Activated T-helper 1 cell treated with anti-CD3 and anti-CD28 coated beads, Interleukin-12 subunit alpha, Interleukin-12 subunit beta, Interleukin-2, Interleukin-4 antibody, amounts not matched to agents 30 ng/mL and 10 ng/mL and 1 ng/mL, durations not matched to agents 14 hours and 24 hours and 36 hours (primary cell): ENCODE measurements at regions of chr3 and their contacts with region 1.

Region 1: GRCh38 chr3:107235928-107236315 is 141.3 kb upstream of the CCDC54 start:
- DNase-seq: peak; percentile 44
- H3K4me3 Mint-ChIP-seq: peak overlapping the region; percentile 48
- H3K27ac Mint-ChIP-seq: no peak overlapping the region
- H3K4me1 Mint-ChIP-seq: peaks cover 11% of the 10 kb centered on the region
- H3K27me3 Mint-ChIP-seq: peaks cover 19% of the 10 kb centered on the region

Region 2: GRCh38 chr3:107421170-107421792 is 185.4 kb after region 1 on chr3:
- intact Hi-C with region 1: loop called (anchors 1 kb)
- DNase-seq: no peak
- H3K4me3 Mint-ChIP-seq: no peak overlapping the region
- H3K27ac Mint-ChIP-seq: no peak overlapping the region
- H3K4me1 Mint-ChIP-seq: peaks cover 5% of the 10 kb centered on the region
- H3K27me3 Mint-ChIP-seq: peaks cover 37% of the 10 kb centered on the region

Region 3: GRCh38 chr3:107522510-107523288 is 286.8 kb after region 1 on chr3 and contains the start of gene BBX:
- intact Hi-C with region 1: loop called (anchors 2 kb)
- DNase-seq: peak; percentile 88
- H3K4me3 Mint-ChIP-seq: peak within 1 kb of the TSS; percentile 92
- H3K27ac Mint-ChIP-seq: peak within 1 kb of the TSS; percentile 96
- H3K4me1 Mint-ChIP-seq: peaks cover 32% of the 10 kb centered on the region
- H3K27me3 Mint-ChIP-seq: peaks cover 4% of the 10 kb centered on the region
- total RNA-seq, gene BBX: 38.1 and 45.1 TPM in 2 replicates

Region 4: GRCh38 chr3:107740992-107741896 is 505.3 kb after region 1 on chr3:
- intact Hi-C with region 1: loop called (anchors 2 kb)
- DNase-seq: no peak
- H3K4me3 Mint-ChIP-seq: no peak overlapping the region
- H3K27ac Mint-ChIP-seq: no peak overlapping the region
- H3K4me1 Mint-ChIP-seq: no peaks in the 10 kb centered on the region
- H3K27me3 Mint-ChIP-seq: no peaks in the 10 kb centered on the region

Region 5: DNA sequence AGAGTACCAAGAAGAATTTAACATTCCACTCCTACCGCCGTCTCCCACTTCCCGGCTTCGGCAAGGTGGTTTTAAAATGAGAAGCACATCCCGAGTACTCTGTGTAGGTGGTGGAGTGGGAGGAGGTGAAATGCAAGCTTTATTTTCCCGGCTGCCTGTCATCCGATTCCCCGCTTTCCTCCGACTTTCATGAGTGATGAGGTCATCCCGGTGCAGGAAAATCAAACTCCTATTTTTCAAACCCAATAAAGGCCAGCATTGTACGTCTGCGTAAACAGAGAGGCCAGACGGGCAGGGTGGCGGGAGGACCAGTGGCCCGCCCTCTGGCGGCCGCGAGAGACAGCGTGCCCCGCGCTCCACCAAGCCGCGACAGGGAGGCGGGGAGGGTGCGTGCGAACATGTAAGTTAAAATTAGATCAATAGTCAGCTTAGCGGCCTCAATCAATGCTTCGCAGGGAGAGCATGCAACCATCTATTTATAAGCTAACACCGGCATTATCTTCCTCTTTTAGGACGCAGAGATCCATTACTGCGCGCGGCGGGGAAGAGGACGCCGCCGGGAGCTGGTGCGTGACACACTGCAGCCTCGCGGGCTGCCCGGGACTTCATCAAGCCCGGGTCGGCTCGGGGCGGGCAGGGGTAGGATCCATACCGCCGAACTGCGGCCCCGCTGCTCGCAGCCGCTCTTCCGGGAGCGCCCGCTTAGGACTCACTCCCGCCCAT is 691.6 kb after region 1 on chr3:
- intact Hi-C with region 1: loop called (anchors 1 kb)
- DNase-seq: peak; percentile 50
- H3K4me3 Mint-ChIP-seq: peak overlapping the region; percentile 85
- H3K27ac Mint-ChIP-seq: no peak overlapping the region
- H3K4me1 Mint-ChIP-seq: peaks cover 9% of the 10 kb centered on the region
- H3K27me3 Mint-ChIP-seq: peaks cover 18% of the 10 kb centered on the region

Region 6: DNA sequence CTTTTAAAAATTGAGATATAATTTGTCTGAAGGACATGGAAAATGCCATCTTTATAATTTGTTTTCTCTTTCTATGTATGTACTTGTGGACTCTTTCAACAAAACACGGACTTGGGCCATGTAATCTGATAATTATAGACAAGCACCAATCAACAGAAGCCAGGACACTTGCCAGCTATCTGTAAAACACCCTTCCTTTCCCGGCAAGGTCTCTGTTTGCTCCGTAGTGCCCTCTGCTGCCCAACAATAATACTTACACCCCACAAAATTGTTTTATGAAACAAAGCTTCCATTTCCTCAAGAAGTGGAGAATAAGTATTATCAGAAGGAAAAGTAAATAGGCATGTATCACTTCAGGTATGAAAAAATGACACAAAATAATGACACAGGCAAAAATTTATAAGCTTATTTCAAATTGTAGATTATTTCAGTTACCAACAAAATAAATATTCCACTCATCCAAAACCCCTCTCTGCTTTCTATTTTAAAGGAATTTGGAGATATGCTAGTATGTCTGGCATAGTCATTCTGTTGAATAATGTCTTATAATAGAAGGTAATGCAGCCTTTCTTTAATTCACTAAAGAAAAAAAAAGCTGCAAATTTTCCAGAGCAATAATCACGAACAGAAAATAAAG is 1241.7 kb after region 1 on chr3:
- intact Hi-C with region 1: loop called (anchors 1 kb)
- DNase-seq: peak; percentile 50
- H3K4me3 Mint-ChIP-seq: no peak overlapping the region
- H3K27ac Mint-ChIP-seq: no peak overlapping the region
- H3K4me1 Mint-ChIP-seq: no peaks in the 10 kb centered on the region
- H3K27me3 Mint-ChIP-seq: peaks cover 13% of the 10 kb centered on the region